Adrenal gland (tissue), 19 donors: ENCODE measurements at regions of chr10 and their contacts with region 1.

Region 1: DNA sequence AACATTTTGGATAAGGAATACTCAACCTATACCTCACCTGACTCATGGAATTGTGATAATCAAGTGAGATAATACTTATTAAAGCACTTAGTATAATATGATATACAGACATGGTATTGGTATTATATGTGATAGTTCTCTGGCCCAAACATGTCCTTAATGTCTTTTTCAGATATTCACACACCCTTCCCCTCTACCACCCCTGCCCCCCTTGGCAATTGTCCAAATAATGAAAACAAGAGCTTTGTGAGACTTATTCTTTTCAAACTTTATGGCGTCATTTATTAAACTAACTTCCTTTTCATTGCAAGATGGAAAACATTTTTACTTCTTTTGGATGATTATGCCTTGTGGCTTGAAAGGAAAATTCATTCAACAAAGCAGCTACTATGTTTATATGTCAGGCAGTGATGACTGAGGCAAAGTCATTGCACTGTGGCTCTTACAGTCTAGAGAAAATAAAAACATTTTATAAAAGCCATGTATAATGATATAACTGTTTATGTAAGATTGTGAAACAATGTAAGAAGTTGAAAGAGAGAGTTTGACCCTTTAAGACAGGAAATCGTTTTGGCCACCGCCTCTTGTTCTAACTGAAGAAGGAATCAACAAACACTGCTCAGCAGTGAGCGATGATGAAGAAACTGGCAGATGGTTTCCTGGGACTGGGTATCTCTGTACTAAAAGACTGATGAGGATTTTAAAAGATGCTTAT is 27.4 kb downstream of the MINPP1 start:
- DNase-seq: peak in 1 of 7 donors; percentile 36
- H3K4me3 ChIP-seq: no peak overlapping the region
- H3K27ac ChIP-seq: peak overlapping the region in 4 of 5 donors; percentile 20 to 61 (median 54)
- H3K4me1 ChIP-seq: peaks cover 0 to 25% of the 10 kb centered on the region in 2 donors
- H3K27me3 ChIP-seq: no peaks in the 10 kb centered on the region
- CTCF ChIP-seq: no peak
- POLR2A ChIP-seq: no peak

Region 2: DNA sequence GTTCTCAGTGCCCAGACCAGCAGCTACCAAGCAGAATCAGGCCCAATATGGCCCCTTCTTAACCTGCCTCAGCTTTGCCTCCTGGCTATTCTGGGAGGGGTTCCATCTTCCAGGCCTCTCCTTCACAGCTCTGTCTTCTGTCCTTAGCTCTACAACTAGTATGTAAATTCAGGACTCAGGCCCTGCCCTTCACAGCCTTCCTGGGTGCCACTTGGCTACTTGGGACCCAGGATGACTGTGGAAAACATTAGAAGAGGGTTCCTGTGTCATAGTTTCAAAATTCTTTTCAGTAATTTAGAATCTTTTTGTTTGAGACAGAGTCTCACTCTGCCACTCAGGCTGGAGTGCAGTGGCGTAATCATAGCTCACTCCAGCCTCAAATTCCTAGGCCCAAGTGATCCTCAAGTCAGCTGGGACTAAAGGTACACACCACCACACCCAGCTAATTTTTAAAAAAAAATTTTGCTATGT is 94.4 kb after region 1 on chr10:
- intact Hi-C with region 1: no loop called
- DNase-seq: no peak
- H3K4me3 ChIP-seq: no peak overlapping the region
- H3K27ac ChIP-seq: no peak overlapping the region
- H3K4me1 ChIP-seq: no peaks in the 10 kb centered on the region
- H3K27me3 ChIP-seq: no peaks in the 10 kb centered on the region
- CTCF ChIP-seq: no peak
- POLR2A ChIP-seq: no peak

Region 3: DNA sequence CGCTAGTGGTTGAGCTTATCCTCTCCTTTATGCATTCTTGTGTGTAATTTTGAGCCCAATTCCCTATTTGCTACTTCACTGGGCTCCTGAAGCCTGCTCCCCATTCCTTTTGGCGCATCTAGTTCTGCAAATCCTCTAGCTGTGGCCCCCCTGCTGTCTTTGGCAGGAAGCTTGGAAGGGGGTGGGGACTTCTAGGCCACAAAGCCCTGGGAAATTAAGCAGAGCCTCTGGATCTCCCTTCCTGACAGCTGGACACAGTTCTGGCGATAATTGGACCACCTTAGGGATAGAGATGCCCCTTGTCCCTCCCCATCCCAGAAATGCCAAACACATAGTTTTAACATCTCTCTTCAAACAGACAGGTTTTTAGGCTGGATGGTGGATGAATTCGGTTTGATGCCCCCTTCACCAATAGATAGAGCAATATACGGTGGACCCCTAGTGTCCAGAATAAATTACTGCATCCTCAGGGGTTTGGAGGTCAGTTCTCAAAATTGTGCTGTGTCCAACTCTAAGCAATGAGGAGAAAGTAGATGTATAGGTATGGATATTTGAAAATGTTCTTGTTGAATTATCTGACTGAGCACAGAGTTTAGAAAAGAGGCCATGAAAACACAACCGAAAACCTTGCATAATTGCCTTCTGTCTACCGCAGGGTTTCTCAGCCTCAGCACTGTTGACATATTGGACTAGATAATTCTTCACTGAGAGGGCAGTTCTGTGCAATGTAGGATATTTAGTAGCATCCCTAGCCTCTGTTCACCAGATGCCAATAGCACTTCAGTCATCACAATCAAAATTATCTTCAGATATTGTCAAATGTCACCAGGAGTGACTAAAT is 203.1 kb after region 1 on chr10:
- intact Hi-C with region 1: loop called (anchors 10 kb)
- DNase-seq: peak in 3 of 7 donors; percentile 26 to 35 (median 28)
- H3K4me3 ChIP-seq: no peak overlapping the region
- H3K27ac ChIP-seq: peak overlapping the region in 1 of 5 donors; percentile 72
- H3K4me1 ChIP-seq: peaks cover 0 to 24% of the 10 kb centered on the region in 2 donors
- H3K27me3 ChIP-seq: no peaks in the 10 kb centered on the region
- CTCF ChIP-seq: peak; percentile 67 to 85 (median 80)
- POLR2A ChIP-seq: no peak